Naive thymus-derived CD4-positive, alpha-beta T cell (primary cell): ENCODE measurements at regions of chr12 and their contacts with region 1.

Region 1: DNA sequence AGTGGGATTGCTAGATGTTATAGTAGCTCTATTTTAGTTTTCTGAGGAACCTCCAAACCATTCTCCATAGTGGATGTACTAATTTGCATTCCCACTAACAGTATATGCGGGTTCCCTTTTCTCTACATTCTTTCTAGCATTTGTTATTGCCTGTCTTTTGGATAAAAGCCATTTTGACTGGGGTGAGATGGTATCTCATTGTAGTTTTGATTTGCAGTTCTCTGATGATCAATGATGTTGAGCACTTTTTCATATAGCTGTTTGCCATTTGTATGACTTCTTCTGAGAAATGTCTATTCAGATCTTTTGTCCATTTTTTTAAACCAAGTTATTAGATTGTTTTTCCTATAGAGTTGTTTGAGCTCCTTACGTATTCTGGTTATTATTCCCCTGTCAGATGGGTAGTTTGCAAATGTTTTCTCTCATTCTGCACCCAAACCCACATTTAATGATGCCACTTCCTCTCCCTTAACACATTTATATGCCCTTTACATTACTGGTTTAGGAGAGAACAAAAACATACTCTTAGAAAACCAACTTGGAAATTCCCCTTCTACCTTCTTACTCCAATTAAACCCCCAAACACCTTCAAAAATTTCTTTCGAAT is 48.2 kb downstream of the NELL2 start:
- DNase-seq: peak in 7 of 9 donors; percentile 44 to 82 (median 72)
- ATAC-seq: peak; percentile 92
- H3K4me3 ChIP-seq: peak overlapping the region; percentile 31
- H3K4me3 Mint-ChIP-seq: peak overlapping the region; percentile 56 to 81 (median 76)
- H3K27ac ChIP-seq: peak overlapping the region; percentile 74
- H3K27ac Mint-ChIP-seq: peak overlapping the region; percentile 84 to 99 (median 92)
- H3K4me1 ChIP-seq: peaks cover 28 to 36% of the 10 kb centered on the region in 2 donors
- H3K4me1 Mint-ChIP-seq: peaks cover 13 to 85% (median 66%) of the 10 kb centered on the region in 7 donors
- H3K27me3 ChIP-seq: no peaks in the 10 kb centered on the region
- H3K27me3 Mint-ChIP-seq: no peaks in the 10 kb centered on the region

Region 2: GRCh38 chr12:43869184-43869583 is 958.8 kb before region 1 on chr12:
- CTCF ChIA-PET with region 1: no interaction called
- POLR2A ChIA-PET with region 1: no interaction called
- intact Hi-C with region 1: no loop called
- DNase-seq: no peak
- ATAC-seq: no peak
- H3K4me3 ChIP-seq: no peak overlapping the region
- H3K4me3 Mint-ChIP-seq: no peak overlapping the region
- H3K27ac ChIP-seq: no peak overlapping the region
- H3K27ac Mint-ChIP-seq: no peak overlapping the region
- H3K4me1 ChIP-seq: no peaks in the 10 kb centered on the region
- H3K4me1 Mint-ChIP-seq: no peaks in the 10 kb centered on the region
- H3K27me3 ChIP-seq: no peaks in the 10 kb centered on the region
- H3K27me3 Mint-ChIP-seq: peaks cover 0 to 3% (median 0%) of the 10 kb centered on the region in 5 donors

Region 3: GRCh38 chr12:44817687-44818086 is 10.2 kb before region 1 on chr12:
- CTCF ChIA-PET with region 1: interaction called, 8 read pairs
- POLR2A ChIA-PET with region 1: interaction called, 7 read pairs
- intact Hi-C with region 1: loop called (anchors 1 kb)
- DNase-seq: no peak
- ATAC-seq: no peak
- H3K4me3 ChIP-seq: no peak overlapping the region
- H3K4me3 Mint-ChIP-seq: peak overlapping the region in 3 of 10 donors; percentile 9 to 39 (median 28)
- H3K27ac ChIP-seq: no peak overlapping the region
- H3K27ac Mint-ChIP-seq: peak overlapping the region in 8 of 9 donors; percentile 5 to 91 (median 37)
- H3K4me1 ChIP-seq: peaks cover 17 to 24% of the 10 kb centered on the region in 2 donors
- H3K4me1 Mint-ChIP-seq: peaks cover 13 to 84% (median 64%) of the 10 kb centered on the region in 7 donors
- H3K27me3 ChIP-seq: no peaks in the 10 kb centered on the region
- H3K27me3 Mint-ChIP-seq: no peaks in the 10 kb centered on the region

Region 4: GRCh38 chr12:44842669-44843068 is 14.7 kb after region 1 on chr12:
- CTCF ChIA-PET with region 1: interaction called, 9 read pairs
- POLR2A ChIA-PET with region 1: interaction called, 60 read pairs
- intact Hi-C with region 1: loop called in 1 of 2 experiments (anchors 1 kb)
- DNase-seq: no peak
- ATAC-seq: peak; percentile 41
- H3K4me3 ChIP-seq: peak overlapping the region; percentile 4
- H3K4me3 Mint-ChIP-seq: peak overlapping the region; percentile 17 to 86 (median 60)
- H3K27ac ChIP-seq: peak overlapping the region; percentile 33
- H3K27ac Mint-ChIP-seq: peak overlapping the region; percentile 65 to 98 (median 89)
- H3K4me1 ChIP-seq: peaks cover 46 to 57% of the 10 kb centered on the region in 2 donors
- H3K4me1 Mint-ChIP-seq: peaks cover 27 to 96% (median 80%) of the 10 kb centered on the region in 7 donors
- H3K27me3 ChIP-seq: no peaks in the 10 kb centered on the region
- H3K27me3 Mint-ChIP-seq: no peaks in the 10 kb centered on the region